ENCODE measurements at regions of chr5 and their contacts with region 1.

Region 1: GRCh38 chr5:116574367-116575325 is at the start of gene SEMA6A:
- DNase-seq: peak; percentile 89
- CTCF ChIP-seq: no peak

Region 2: DNA sequence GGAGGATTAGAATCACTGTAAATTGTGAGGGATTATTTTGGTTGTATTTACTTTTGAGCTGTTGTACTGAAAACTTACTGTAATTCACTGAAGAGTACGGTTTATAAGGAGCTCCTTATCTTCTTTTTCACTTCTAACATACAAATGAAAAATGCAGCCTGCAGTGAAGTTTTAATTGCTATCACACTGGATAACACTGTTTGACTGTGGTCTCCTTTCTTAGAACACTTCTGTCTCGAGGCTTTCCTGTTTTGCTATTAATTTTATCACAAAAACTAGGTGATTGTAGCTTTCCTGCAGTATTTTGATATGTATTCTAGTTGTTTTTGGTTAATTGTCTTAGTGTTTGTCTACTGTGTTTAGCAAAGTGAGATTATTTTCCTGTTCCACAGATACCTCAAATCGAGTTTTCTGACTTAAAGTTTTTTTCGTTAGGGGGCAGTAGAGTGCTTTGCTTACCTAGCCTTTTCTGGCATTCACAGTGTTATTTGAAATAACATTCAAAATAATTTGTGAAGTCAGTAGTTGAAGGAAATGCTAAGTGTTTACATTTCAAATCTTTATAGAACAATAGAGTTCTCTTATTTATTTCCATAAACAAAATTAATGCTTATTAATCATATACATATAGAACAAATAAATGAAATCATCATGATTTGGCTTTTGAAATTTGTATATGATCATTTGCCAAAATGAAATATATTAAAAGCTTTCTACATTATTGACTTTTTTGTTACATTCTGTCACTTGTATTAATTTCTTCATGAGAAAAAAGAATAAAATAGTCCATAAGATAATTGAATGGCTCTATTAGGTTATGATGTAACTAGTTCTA is 436.9 kb before region 1 on chr5:
- in situ Hi-C with region 1: loop called (anchors 25 kb)
- DNase-seq: peak; percentile 40
- CTCF ChIP-seq: peak; percentile 55

Region 3: DNA sequence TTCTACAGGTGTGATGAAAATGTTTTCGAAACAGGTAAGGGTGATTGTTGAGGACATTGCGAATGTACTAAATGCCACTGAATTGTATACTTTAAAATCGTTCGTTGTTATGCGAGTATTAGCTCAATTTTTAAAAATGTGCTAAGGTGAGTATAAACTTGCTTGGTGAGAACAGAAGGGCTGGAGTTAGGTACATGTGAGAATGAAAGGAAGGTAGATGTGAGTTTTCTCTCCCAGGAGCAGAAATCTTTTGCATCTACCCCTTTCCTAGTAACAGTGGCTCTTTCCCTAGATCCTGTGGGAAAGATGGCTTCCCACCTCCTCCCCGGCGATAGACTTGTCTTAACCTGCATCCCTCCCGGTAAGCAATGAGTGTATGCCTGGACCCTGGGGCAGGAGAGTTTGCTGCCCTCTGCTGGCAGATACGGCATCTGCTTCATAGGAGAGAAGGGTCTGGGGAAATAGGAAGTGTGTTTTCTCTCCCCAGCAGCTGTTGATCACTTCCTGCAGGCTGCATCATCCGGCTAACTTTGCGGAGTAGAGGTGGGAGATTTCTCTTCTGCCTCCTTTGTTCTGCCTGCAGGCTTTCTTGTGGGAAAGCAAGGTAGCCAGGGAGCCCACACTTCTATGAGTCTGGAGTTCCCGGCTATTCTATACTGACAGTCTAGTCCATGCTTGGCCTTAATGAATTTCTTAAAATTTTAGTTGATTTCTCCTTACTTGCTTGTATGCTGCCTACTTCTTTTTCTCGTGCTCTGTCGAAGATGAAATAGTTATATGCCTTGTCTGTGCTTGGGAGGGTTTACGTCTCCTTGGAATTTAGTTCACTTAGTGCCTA is 373.3 kb after region 1 on chr5:
- in situ Hi-C with region 1: loop called (anchors 10 kb)
- DNase-seq: peak; percentile 55
- CTCF ChIP-seq: peak; percentile 89